T-cell (primary cell): ENCODE measurements at regions of chr17 and their contacts with region 1.

Region 1: DNA sequence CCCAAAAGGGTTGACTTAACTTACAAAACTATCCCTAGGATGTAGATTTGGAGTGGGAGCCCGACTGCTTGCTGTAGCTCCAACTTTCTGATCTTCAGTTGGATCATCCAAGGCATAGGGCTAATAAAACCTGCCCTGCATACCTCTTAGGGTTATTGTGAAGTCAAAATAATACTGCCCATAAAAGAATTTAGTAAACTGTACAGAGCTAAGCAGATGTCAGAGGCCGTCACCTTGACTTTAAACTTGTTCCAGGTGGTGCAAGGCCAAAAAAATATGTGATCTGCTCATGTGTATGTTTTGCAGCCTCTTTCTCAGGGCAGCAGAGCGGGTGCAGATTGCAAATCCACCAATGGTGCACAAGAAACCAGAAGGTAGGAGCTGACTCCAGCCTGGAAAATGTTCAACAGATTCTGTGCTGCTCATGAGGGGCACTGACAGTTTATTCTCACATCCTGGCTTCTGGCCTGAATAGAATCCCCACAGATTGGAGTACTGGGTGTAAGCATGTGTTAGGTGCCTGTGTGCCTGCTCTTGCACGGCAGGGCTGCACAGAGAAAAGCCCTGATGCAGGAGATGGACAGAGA is 180.7 kb downstream of the MAP2K4 start:
- DNase-seq: no peak
- ATAC-seq: no peak
- H3K4me3 ChIP-seq: no peak overlapping the region
- H3K4me3 Mint-ChIP-seq: no peak overlapping the region
- H3K27ac ChIP-seq: no peak overlapping the region
- H3K27ac Mint-ChIP-seq: no peak overlapping the region
- H3K4me1 ChIP-seq: no peaks in the 10 kb centered on the region
- H3K4me1 Mint-ChIP-seq: no peaks in the 10 kb centered on the region
- H3K27me3 ChIP-seq: peaks cover 0 to 4% of the 10 kb centered on the region in 2 experiments
- H3K27me3 Mint-ChIP-seq: peaks cover 0 to 2% of the 10 kb centered on the region in 2 donors

Region 2: DNA sequence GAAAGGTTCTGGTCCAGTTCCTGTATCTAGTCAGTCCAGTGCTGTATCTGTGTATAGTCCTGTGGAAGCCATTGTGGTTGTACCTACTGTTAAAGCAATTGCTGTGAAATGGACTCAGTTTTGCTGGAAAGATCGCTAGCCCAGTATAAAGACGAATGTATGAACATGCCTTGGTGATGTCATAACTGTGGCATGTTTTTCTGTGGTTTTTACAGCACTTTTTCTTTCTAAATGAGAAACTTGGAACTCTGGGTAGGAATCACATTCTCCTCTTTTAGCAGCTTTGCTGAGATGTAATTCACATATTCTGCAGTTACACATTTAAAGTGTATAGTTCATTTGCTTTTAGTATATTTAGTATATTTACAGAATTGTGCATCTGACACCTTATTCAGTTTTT is 122.6 kb before region 1 on chr17:
- CTCF ChIA-PET with region 1: no interaction called
- POLR2A ChIA-PET with region 1: no interaction called
- DNase-seq: no peak
- ATAC-seq: no peak
- H3K4me3 ChIP-seq: no peak overlapping the region
- H3K4me3 Mint-ChIP-seq: no peak overlapping the region
- H3K27ac ChIP-seq: no peak overlapping the region
- H3K27ac Mint-ChIP-seq: no peak overlapping the region
- H3K4me1 ChIP-seq: no peaks in the 10 kb centered on the region
- H3K4me1 Mint-ChIP-seq: peaks cover 16 to 36% (median 22%) of the 10 kb centered on the region in 3 donors
- H3K27me3 ChIP-seq: no peaks in the 10 kb centered on the region
- H3K27me3 Mint-ChIP-seq: no peaks in the 10 kb centered on the region

Region 3: DNA sequence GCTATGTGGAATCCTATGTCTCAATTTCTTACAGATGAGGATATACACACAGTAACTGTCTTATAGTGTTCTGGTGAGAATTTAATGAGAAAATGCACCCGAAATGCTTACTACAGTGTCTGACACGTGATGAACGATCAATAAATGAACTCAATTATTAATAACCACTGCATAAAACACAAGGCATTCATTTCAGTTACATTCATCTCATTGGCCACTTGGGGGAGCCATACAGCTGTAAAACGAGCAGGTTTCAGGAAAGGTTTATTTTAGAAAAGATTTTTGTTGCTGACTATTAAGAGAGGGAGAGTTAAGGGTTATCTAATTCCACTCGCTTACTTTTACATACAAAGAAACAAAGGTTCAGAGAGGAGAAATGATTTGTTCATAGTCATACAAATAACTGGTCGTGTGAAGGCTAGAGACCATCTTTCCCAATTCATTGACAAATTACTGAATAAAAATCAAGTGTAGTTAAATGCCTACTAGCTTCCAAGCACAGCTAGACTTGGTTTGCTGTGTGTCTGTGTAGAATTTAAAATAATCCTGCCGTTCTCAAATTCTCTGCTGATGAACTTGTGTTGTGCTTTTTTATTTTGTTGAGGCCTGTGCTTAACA is 20.6 kb before region 1 on chr17:
- CTCF ChIA-PET with region 1: no interaction called
- POLR2A ChIA-PET with region 1: no interaction called
- DNase-seq: peak in 4 of 35 experiments; percentile 1 to 37 (median 3)
- ATAC-seq: no peak
- H3K4me3 ChIP-seq: no peak overlapping the region
- H3K4me3 Mint-ChIP-seq: no peak overlapping the region
- H3K27ac ChIP-seq: no peak overlapping the region
- H3K27ac Mint-ChIP-seq: no peak overlapping the region
- H3K4me1 ChIP-seq: no peaks in the 10 kb centered on the region
- H3K4me1 Mint-ChIP-seq: no peaks in the 10 kb centered on the region
- H3K27me3 ChIP-seq: no peaks in the 10 kb centered on the region
- H3K27me3 Mint-ChIP-seq: no peaks in the 10 kb centered on the region

Region 4: DNA sequence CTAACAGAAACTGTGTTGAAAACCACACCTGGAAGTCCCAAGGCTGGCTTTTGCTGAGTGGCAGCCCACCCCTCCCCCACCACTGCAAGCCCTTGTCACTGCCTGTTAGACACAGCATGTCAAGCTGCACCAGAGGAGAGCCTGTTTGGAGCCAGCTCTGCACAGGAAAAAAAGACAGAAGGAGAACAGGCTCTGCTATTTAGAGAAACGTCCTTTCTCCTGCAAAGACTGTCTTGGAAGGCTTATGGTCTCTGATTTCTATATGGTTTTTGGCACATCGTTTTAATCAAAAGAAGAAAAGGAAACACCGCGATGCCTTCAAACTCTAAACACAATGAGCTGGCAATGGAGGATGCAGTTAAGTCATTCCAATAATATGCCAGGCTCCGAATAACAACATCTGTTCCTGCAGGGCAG is 94.8 kb after region 1 on chr17:
- CTCF ChIA-PET with region 1: no interaction called
- POLR2A ChIA-PET with region 1: no interaction called
- DNase-seq: no peak
- ATAC-seq: no peak
- H3K4me3 ChIP-seq: no peak overlapping the region
- H3K4me3 Mint-ChIP-seq: no peak overlapping the region
- H3K27ac ChIP-seq: no peak overlapping the region
- H3K27ac Mint-ChIP-seq: no peak overlapping the region
- H3K4me1 ChIP-seq: no peaks in the 10 kb centered on the region
- H3K4me1 Mint-ChIP-seq: no peaks in the 10 kb centered on the region
- H3K27me3 ChIP-seq: no peaks in the 10 kb centered on the region
- H3K27me3 Mint-ChIP-seq: no peaks in the 10 kb centered on the region

Region 5: GRCh38 chr17:12463102-12463501 is 261.7 kb after region 1 on chr17:
- CTCF ChIA-PET with region 1: interaction called in 1 of 2 experiments, 10 read pairs
- POLR2A ChIA-PET with region 1: no interaction called
- DNase-seq: no peak
- ATAC-seq: no peak
- H3K4me3 ChIP-seq: no peak overlapping the region
- H3K4me3 Mint-ChIP-seq: no peak overlapping the region
- H3K27ac ChIP-seq: no peak overlapping the region
- H3K27ac Mint-ChIP-seq: no peak overlapping the region
- H3K4me1 ChIP-seq: no peaks in the 10 kb centered on the region
- H3K4me1 Mint-ChIP-seq: no peaks in the 10 kb centered on the region
- H3K27me3 ChIP-seq: no peaks in the 10 kb centered on the region
- H3K27me3 Mint-ChIP-seq: no peaks in the 10 kb centered on the region